Sigmoid colon (tissue), 7 donors: ENCODE measurements at regions of chr2 and their contacts with region 1.

Region 1: GRCh38 chr2:32168513-32168912 is 2.8 kb downstream of the SLC30A6 start:
- DNase-seq: no peak
- H3K4me3 ChIP-seq: no peak overlapping the region
- H3K27ac ChIP-seq: no peak overlapping the region
- H3K4me1 ChIP-seq: peaks cover 0 to 16% (median 13%) of the 10 kb centered on the region in 4 donors
- H3K27me3 ChIP-seq: no peaks in the 10 kb centered on the region
- CTCF ChIP-seq: no peak
- EP300 ChIP-seq: no peak
- POLR2A ChIP-seq: no peak

Region 2: GRCh38 chr2:32063310-32064161 is 105.0 kb before region 1 on chr2 and contains the start of gene SPAST:
- intact Hi-C with region 1: loop called (anchors 1 kb)
- DNase-seq: peak; percentile 98
- H3K4me3 ChIP-seq: peak within 1 kb of the TSS; percentile 55 to 90 (median 71)
- H3K27ac ChIP-seq: peak within 1 kb of the TSS; percentile 84 to 91 (median 90)
- H3K4me1 ChIP-seq: peaks cover 0 to 18% (median 9%) of the 10 kb centered on the region in 4 donors
- H3K27me3 ChIP-seq: no peaks in the 10 kb centered on the region
- CTCF ChIP-seq: peak; percentile 66 to 79 (median 74)
- EP300 ChIP-seq: peak in 1 of 4 donors; percentile 17
- POLR2A ChIP-seq: peak in 1 of 2 donors; percentile 30
- total RNA-seq, gene SPAST: 12.2 to 24.2 (median 15.1) TPM

Region 3: DNA sequence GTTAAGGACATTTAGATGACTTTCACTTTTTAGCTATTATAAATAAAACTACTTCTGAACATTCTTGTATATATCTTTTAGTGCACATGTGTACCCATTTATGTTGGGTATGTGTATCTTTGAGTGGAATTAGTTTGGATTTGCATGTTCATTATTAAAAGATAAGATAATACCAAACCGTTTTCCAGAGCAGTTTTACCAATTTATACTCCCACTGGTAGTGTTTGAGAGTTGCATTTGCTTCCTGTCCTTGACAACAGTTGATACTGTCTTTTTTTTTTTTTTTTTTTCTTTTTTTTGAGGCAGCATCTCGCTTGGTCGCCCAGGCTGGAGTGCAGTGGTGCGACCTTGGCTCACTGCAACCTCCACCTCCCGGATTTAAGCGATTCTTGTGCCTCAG is 20.5 kb after region 1 on chr2:
- intact Hi-C with region 1: no loop called
- DNase-seq: no peak
- H3K4me3 ChIP-seq: no peak overlapping the region
- H3K27ac ChIP-seq: no peak overlapping the region
- H3K4me1 ChIP-seq: no peaks in the 10 kb centered on the region
- H3K27me3 ChIP-seq: no peaks in the 10 kb centered on the region
- CTCF ChIP-seq: no peak
- EP300 ChIP-seq: no peak
- POLR2A ChIP-seq: no peak

Region 4: DNA sequence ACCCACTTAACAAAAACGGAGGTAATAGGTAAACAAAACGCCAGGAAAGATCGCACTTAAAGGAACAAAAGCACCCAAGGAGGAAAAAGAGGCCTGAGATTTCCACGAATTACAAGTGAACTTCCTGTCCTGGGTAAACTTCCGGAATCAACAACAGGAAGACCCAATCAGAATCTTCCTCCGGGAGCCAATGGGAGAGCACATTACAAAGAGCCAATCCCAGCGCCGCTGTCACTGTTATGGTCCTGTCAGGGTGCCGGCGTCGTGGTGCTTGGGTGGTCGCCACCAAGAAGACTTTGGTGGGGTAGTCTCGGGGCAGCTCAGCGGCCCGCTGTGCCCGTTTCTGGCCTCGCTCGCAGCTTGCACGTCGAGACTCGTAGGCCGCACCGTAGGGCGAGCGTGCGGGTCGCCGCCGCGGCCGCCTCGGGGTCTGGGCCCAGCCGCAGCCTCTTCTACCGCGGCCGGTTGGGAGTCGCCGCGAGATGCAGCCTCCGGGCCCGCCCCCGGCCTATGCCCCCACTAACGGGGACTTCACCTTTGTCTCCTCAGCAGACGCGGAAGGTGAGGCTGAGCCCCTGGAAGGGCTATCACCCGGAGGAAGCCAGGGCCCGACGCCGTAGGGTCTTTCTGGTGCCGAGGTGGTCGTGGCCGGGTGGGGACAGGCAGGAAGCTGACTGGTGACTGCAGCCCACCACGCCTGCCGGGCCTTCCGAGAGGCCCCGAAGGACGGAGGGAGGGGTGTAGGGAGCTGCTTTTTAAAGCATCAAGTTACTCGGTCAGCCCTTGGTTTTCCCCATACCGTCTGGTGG is 109.4 kb after region 1 on chr2 and contains the start of gene YIPF4:
- intact Hi-C with region 1: loop called (anchors 1 kb)
- DNase-seq: peak; percentile 93
- H3K4me3 ChIP-seq: peak within 1 kb of the TSS; percentile 73 to 93 (median 86)
- H3K27ac ChIP-seq: peak within 1 kb of the TSS; percentile 80 to 87 (median 84)
- H3K4me1 ChIP-seq: peaks cover 0 to 38% (median 23%) of the 10 kb centered on the region in 4 donors
- H3K27me3 ChIP-seq: no peaks in the 10 kb centered on the region
- CTCF ChIP-seq: no peak
- EP300 ChIP-seq: no peak
- POLR2A ChIP-seq: no peak
- total RNA-seq, gene YIPF4: 14.1 to 26.4 (median 23.2) TPM

Region 5: DNA sequence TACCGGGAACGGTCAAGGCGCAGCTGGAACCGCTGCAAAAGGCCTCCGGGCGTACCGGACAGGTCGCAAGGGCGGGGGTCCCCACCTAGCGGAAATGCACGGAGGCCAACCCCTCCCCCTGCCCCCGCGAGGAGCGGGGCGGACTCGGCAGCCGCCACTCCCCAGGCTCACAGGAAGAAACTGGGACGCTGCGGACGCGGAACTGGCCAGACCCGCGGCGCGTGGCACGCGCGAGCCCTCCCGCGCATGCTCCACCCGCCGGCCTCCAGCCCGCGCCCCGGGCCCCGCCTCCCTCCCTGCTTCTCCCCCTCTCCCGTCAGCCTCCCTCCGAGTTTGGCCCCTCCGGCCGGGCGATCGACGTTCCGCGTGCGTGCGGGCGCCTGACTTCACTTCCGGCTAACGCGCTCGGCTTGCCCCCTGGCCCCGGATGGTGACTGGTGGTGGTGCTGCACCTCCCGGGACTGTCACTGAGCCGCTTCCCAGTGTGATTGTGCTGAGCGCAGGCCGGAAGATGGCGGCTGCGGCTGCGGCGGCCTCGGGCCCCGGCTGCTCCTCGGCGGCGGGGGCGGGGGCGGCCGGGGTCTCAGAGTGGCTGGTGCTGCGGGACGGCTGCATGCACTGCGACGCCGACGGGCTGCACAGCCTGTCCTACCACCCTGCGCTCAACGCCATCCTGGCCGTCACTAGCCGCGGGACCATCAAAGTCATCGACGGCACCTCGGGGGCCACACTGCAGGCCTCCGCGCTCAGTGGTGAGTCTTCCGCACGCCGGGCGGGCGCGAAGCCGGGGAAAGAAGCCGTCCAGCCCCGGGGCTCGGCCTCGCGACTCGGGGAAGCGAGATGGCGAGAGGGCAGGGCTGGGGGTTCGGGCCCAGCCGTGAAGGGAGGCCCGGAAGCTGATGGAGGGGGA is 188.5 kb after region 1 on chr2 and contains the start of gene BIRC6:
- intact Hi-C with region 1: loop called (anchors 2 kb)
- DNase-seq: peak; percentile 99
- H3K4me3 ChIP-seq: peak within 1 kb of the TSS; percentile 89 to 99 (median 96)
- H3K27ac ChIP-seq: peak within 1 kb of the TSS; percentile 92 to 99 (median 99)
- H3K4me1 ChIP-seq: peaks cover 0 to 41% (median 31%) of the 10 kb centered on the region in 4 donors
- H3K27me3 ChIP-seq: no peaks in the 10 kb centered on the region
- CTCF ChIP-seq: no peak
- EP300 ChIP-seq: no peak
- POLR2A ChIP-seq: peak; percentile 61 to 70
- total RNA-seq, gene BIRC6: 86.4 to 122 (median 110) TPM